SK-N-SH (cell line): ENCODE measurements at regions of chr1 and their contacts with region 1.

Region 1: DNA sequence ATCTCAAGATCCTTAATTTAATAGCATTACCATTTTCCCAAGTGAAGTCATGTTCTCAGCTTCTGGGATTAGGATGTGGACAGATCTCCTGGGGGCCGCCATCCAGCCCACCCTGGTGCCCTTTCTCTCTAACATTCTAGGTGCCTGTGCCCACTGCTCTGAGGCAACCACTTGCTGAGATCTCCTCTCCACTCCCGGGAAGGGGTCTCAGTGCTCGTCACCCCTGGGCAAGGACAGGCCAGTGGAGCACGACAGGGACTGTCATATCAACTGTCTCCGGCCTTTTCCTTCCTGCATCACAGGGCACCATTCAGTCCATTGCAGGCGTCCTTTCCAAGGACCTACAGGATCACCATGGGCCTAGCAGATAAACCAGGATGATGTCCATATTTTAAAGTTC is 304.8 kb downstream of the AJAP1 start:
- DNase-seq: no peak
- H3K4me3 ChIP-seq: no peak overlapping the region
- H3K27ac ChIP-seq: no peak overlapping the region
- H3K4me1 ChIP-seq: no peaks in the 10 kb centered on the region
- H3K27me3 ChIP-seq: no peaks in the 10 kb centered on the region
- CTCF ChIP-seq: no peak
- EP300 ChIP-seq: no peak
- RAD21 ChIP-seq: no peak

Region 2: DNA sequence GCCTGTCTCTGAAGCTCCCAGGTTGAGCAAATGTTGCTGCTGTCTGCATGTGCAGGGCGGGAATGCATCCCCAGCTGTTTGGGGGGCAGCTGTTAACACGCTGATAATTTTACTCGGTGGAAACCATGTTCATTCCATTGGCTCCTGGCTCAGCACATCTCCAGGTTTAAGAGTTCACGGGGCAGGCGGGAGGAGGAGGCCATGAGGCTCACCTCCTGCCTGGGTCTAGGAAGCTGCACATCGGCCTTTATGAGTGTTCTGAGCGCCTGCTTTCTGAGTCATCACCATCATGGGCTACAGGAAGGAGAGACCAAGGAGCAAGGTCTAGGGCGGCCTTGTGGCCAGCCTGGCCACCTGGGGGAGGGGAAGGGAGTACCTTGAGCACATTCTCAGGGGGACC is 275.1 kb before region 1 on chr1:
- CTCF ChIA-PET with region 1: no interaction called
- POLR2A ChIA-PET with region 1: no interaction called
- DNase-seq: no peak
- H3K4me3 ChIP-seq: no peak overlapping the region
- H3K27ac ChIP-seq: no peak overlapping the region
- H3K4me1 ChIP-seq: peaks cover 0 to 5% of the 10 kb centered on the region in 2 experiments; a peak in 1 of 4 replicates
- H3K27me3 ChIP-seq: no peaks in the 10 kb centered on the region
- CTCF ChIP-seq: no peak
- EP300 ChIP-seq: no peak
- RAD21 ChIP-seq: no peak

Region 3: DNA sequence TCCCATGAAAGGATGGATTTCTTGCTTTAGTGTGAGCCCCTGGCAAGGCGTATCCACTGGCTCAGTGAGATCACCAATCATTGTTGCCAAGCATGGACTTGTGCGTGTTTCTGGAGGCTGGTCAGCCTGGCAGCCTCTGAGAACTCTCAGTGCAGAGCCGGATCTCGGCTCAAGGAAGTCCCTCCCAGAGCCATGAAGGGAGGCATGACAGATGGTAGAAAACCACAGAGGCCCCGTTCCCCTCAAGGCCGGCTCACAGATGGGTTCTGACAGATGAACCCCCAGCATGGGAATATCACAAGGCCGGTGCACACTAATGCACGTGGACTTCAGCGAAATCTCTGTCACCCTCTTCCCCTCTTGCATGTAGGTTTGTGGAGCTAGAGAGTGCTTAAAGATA is 14.3 kb before region 1 on chr1:
- CTCF ChIA-PET with region 1: interaction called, 10 read pairs
- POLR2A ChIA-PET with region 1: no interaction called
- DNase-seq: no peak
- H3K4me3 ChIP-seq: no peak overlapping the region
- H3K27ac ChIP-seq: no peak overlapping the region
- H3K4me1 ChIP-seq: no peaks in the 10 kb centered on the region
- H3K27me3 ChIP-seq: no peaks in the 10 kb centered on the region
- CTCF ChIP-seq: no peak
- EP300 ChIP-seq: no peak
- RAD21 ChIP-seq: no peak